Mammary epithelial cell (primary cell): ENCODE measurements at regions of chr11 and their contacts with region 1.

Region 1: DNA sequence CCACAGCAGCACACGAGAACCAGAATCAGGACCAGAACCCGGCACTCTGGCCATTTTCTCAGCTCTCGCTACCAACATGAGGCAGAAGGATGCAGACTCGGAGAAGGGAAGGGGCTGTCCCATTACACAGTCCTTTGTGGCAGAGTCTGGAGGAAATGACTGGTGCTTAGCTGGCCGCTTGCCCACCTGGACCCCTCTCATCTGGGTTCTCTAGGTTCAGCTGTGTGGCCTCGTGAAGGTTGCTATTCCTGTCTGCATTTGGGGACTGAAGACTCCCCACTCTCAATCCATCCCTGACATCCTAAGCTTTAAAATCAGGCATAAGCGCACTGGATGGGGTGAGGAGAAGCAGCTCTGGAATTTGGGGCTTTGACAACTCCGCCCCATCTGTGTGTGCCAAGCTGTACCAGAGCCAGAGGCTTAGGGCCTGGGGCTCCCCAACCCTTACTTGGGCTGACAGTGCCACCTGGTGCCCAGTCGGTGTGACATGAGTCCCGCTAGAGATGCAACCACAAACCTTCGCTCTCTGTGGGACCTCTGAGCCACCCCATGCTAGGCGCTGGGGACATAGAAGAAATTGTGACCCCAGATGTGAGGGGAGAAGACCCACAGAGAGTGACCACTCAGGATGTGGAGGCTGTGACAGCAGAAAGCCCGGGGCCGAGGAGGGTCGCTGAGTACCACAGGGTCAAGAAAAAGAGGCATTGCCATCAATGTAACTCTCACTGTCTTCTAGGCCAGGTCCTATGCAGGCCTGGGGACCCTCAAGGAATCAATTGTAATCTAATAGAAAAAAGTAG is 35.9 kb upstream of the FCHSD2 start:
- DNase-seq: peak; percentile 73
- H3K4me3 ChIP-seq: no peak overlapping the region
- H3K27ac ChIP-seq: no peak overlapping the region
- H3K4me1 ChIP-seq: peaks cover 21% of the 10 kb centered on the region
- H3K27me3 ChIP-seq: no peaks in the 10 kb centered on the region
- CTCF ChIP-seq: peak; percentile 54 to 89

Region 2: DNA sequence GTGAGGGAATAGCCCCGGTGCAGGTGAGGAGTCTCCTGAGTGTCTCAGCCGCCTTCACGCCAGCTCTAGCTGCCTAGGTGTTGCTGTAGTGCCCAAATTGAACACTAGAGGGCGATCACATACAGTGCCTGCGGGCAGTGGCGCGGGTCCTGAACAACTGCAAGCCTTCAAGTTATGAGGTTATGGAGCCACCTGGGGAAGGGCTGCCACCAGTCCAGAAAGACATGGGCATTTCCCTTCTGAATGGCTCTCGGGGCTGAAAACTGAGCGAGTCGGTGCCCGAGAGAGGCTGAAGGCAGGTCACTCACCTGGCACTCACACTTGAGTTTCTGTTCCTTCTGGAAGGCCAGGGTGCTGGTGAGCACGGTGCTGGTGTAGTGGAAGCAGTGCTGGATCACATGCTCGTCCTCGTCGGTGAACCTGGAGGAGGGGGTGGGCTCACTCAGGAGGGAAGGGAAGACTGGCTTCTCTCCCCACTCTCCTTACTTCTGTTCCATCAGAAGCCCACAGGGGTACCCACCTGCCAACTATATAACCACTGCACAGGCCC is 592.1 kb before region 1 on chr11:
- CTCF ChIA-PET with region 1: no interaction called
- dilution Hi-C with region 1: no loop called
- in situ Hi-C with region 1: no loop called
- intact Hi-C with region 1: loop called (anchors 2 kb)
- DNase-seq: peak; percentile 53
- H3K4me3 ChIP-seq: no peak overlapping the region
- H3K27ac ChIP-seq: no peak overlapping the region
- H3K4me1 ChIP-seq: peaks cover 8% of the 10 kb centered on the region
- H3K27me3 ChIP-seq: peaks cover 10% of the 10 kb centered on the region
- CTCF ChIP-seq: peak; percentile 80 to 83

Region 3: DNA sequence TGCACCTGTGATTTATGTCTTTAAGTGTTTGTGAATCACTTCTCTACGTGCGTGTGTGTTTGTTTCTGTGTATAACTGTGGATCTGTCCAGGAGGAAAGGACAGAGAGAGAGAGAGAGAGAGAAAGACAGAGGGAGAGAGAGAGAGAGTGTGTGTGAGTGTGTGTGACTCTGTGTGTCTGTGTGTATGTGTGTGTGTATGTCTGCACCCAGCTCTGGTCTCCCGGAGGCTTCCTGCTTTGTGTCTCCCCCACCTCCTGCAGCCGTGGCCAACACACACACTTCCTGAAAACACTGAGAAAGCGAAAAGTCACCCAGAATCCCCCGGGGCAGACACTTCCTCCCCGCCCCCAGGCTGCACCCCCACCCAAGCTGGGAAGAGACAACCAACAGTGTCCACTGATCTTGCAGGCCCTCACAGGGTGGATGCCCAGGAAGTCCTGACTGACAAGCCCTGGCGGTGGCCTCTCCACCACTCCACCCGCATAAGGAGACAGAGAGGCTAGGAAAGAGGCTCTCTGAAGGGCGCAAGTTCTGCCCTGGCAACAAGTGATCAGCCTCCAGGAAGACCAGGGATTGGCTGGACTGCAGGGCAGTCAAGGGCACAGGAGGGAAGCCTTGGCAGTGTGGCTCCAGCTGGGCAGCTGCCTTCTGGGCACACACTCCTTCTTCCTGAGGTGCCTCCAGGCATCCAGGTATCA is 455.8 kb before region 1 on chr11:
- CTCF ChIA-PET with region 1: no interaction called
- dilution Hi-C with region 1: no loop called
- in situ Hi-C with region 1: loop called (anchors 10 kb)
- intact Hi-C with region 1: loop called (anchors 1 kb)
- DNase-seq: peak; percentile 84
- H3K4me3 ChIP-seq: peak overlapping the region; percentile 49 to 61 (median 58)
- H3K27ac ChIP-seq: peak overlapping the region; percentile 55
- H3K4me1 ChIP-seq: peaks cover 44% of the 10 kb centered on the region
- H3K27me3 ChIP-seq: no peaks in the 10 kb centered on the region
- CTCF ChIP-seq: no peak

Region 4: DNA sequence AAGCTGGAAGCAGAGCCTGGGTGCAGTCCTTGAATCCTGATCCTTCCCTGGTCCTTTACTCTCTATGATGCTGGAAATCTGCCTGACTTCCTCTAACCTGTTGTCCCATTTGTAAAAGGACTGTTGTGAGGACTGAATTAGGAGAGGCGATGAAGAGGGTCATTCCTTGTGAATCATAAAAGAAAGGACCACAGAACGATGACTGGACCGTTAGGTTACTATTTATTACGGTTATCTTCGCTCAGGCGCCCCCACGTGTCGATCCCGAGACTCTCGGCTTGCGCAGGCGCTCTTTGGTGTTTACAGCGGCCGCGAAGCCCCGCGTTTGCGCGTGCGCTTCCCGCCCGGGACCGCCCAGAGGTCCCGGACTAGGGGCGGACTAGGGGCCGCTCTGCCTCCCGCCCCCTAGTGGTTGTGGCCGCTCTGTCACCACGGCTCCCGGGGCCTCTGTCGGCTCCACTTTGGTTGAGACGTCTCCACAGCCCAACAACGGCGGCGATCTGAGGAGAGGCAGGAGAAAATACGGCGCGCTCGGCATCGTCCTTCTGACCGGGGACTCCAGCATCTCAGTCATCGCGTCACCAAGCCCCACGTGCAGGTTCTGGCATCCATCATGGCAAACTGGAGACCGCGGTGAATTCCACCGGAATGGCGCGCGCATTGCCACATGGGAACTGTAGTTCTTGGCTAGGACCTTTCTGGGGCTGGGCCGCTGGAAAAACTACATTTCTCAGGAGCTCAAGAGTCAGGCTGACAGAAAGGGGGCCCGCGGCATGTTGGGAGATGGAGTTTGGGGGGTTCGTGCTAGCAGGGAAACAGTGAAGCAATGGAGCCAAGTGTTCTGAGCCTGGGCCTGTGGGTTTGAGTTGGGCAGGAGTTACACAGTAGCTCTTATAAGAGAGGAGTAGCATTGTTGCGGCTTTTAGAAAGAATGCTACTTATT is 384.3 kb before region 1 on chr11 and contains the start of gene STARD10:
- CTCF ChIA-PET with region 1: no interaction called
- dilution Hi-C with region 1: no loop called
- in situ Hi-C with region 1: no loop called
- intact Hi-C with region 1: loop called (anchors 1 kb)
- DNase-seq: peak; percentile 94
- H3K4me3 ChIP-seq: peak within 1 kb of the TSS; percentile 63 to 69 (median 68)
- H3K27ac ChIP-seq: peak within 1 kb of the TSS; percentile 60
- H3K4me1 ChIP-seq: peaks cover 25% of the 10 kb centered on the region
- H3K27me3 ChIP-seq: no peaks in the 10 kb centered on the region
- CTCF ChIP-seq: peak; percentile 61 to 92
- total RNA-seq, gene STARD10: 32.8 to 63.0 TPM

Region 5: DNA sequence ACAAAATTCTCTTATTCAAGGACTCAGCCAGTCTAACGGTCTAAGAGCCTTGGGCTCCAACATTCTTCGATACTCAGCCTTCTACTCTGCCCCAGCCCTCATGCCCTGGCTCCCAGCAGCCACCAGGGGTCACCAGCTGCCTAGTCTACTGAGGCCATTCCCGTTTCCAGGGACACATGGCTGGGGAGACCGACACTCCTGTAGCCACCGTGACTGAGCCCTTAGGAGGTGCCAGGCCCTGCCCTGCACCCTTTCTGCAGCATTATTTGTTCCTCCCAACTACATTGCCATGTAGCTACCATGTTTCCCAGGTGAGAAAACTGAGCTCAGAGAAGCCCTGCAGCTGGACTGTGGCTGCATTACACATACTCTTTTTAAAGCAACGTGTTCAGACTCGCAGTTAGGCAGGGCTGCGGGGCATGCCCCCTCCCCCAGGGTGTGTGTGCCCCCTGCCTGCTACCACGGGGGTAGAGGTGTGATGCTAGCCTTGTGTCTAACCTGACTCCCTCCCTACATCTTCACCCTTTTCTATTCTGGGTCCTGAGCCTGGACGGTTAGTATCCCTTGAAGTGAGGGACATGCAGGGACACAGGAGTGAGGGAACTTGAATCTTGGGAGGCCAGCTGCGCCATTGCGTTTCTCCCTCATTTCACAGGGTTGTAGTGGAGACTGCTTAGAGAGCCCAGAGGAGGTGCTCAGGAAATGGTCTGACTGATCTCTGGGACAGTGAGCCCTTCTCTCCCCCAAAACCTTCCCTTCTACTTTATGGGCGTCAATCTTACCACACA is 346.3 kb before region 1 on chr11:
- CTCF ChIA-PET with region 1: interaction called, 7 read pairs
- dilution Hi-C with region 1: loop called (anchors 5 kb)
- in situ Hi-C with region 1: loop called in 1 of 2 experiments (anchors 5 kb)
- intact Hi-C with region 1: loop called (anchors 1 kb)
- DNase-seq: peak; percentile 61
- H3K4me3 ChIP-seq: no peak overlapping the region
- H3K27ac ChIP-seq: no peak overlapping the region
- H3K4me1 ChIP-seq: peaks cover 9% of the 10 kb centered on the region
- H3K27me3 ChIP-seq: no peaks in the 10 kb centered on the region
- CTCF ChIP-seq: peak; percentile 93 to 96

Region 6: GRCh38 chr11:73126804-73127480 is 51.0 kb before region 1 on chr11:
- CTCF ChIA-PET with region 1: no interaction called
- dilution Hi-C with region 1: loop called (anchors 5 kb)
- in situ Hi-C with region 1: no loop called
- intact Hi-C with region 1: no loop called
- DNase-seq: no peak
- H3K4me3 ChIP-seq: no peak overlapping the region
- H3K27ac ChIP-seq: no peak overlapping the region
- H3K4me1 ChIP-seq: peaks cover 2% of the 10 kb centered on the region
- H3K27me3 ChIP-seq: no peaks in the 10 kb centered on the region
- CTCF ChIP-seq: no peak

Region 7: DNA sequence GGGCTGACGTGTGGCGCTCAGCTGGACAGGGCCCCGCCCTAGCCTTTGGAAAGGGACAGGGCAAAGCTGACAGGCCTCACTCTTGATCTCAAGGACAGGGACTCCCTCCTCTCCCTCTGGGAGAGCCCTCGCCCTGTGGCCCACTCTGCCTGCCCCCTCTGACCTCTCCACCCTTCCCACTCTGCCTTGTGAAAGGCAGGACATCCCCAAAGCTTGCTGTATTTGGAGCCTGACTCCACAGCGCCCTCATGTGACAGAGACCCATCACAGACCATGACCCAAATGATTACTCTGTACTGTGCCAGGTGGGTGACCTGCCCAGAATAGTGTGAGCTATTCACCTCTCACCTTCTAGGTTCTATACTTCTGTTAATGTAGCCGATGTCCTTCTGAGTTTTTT is 58.9 kb after region 1 on chr11:
- CTCF ChIA-PET with region 1: interaction called, 3 read pairs
- dilution Hi-C with region 1: loop called (anchors 5 kb)
- in situ Hi-C with region 1: no loop called
- intact Hi-C with region 1: no loop called
- DNase-seq: peak; percentile 48
- H3K4me3 ChIP-seq: no peak overlapping the region
- H3K27ac ChIP-seq: no peak overlapping the region
- H3K4me1 ChIP-seq: peaks cover 43% of the 10 kb centered on the region
- H3K27me3 ChIP-seq: no peaks in the 10 kb centered on the region
- CTCF ChIP-seq: peak; percentile 83 to 85